ENCODE measurements at regions of chr1 and their contacts with region 1.

Region 1: GRCh38 chr1:97243973-97244560 is 522.5 kb downstream of the PTBP2 start:
- DNase-seq: peak; percentile 48
- H3K4me3 ChIP-seq: no peak overlapping the region
- H3K27ac ChIP-seq: no peak overlapping the region
- H3K4me1 ChIP-seq: no peaks in the 10 kb centered on the region
- H3K27me3 ChIP-seq: no peaks in the 10 kb centered on the region
- CTCF ChIP-seq: peak in 1 of 2 donors; percentile 35
- POLR2A ChIP-seq: no peak

Region 2: DNA sequence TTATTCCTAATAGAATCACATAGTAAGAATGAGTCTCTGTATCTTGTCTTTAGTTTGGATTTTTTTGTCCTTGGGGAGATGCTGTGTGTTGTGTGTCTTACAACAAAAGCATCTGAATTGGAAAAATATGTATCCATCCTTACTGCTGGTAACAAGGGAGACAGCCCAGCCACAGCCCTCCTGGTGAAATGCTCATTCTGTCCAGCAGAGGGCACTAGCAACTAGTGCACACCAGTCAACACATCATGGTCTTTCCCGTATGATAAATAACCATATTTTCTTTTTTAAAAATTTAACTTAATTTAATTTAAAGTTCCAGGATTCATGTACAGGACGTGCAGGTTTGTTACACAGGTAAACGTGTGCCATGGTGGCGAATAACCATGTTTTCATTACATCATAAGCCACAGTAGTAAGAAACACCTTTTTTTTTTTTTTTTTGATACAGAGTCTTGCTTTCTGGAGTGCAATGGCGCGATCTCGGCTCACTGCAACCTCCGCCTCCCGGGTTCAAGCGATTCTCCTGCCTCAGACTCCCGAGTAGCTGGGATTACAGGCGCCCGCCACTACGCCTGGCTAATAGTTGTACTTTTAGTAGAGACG is 277.4 kb before region 1 on chr1:
- CTCF ChIA-PET with region 1: interaction called, 4 read pairs
- POLR2A ChIA-PET with region 1: no interaction called
- dilution Hi-C with region 1: no loop called
- intact Hi-C with region 1: loop called (anchors 5 kb)
- DNase-seq: peak; percentile 84
- H3K4me3 ChIP-seq: peak overlapping the region in 1 of 3 experiments; percentile 38
- H3K27ac ChIP-seq: no peak overlapping the region
- H3K4me1 ChIP-seq: no peaks in the 10 kb centered on the region
- H3K27me3 ChIP-seq: peaks cover 7 to 12% of the 10 kb centered on the region in 2 experiments
- CTCF ChIP-seq: peak; percentile 81 to 85
- POLR2A ChIP-seq: no peak

Region 3: DNA sequence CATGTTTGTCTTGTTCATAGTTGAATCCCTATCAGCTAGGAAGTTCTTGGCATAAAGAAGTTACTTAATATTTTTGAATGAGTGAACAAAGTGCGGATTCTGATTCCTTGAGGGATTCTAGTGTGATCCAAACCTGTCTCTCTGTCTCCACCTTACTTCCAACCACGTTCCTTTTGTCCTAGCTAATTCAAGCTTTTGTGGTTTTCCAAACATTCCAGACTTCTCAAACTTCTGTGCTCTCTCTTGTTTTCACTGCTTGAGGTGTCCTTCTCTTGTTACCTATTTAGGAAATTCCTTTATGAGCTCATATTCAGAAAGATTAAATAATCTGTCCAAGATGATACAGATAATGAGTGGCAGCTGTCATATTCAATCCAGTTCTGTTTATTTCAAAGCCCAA is 169.3 kb before region 1 on chr1:
- CTCF ChIA-PET with region 1: no interaction called
- POLR2A ChIA-PET with region 1: no interaction called
- dilution Hi-C with region 1: no loop called
- intact Hi-C with region 1: no loop called
- DNase-seq: no peak
- H3K4me3 ChIP-seq: no peak overlapping the region
- H3K27ac ChIP-seq: no peak overlapping the region
- H3K4me1 ChIP-seq: no peaks in the 10 kb centered on the region
- H3K27me3 ChIP-seq: no peaks in the 10 kb centered on the region
- CTCF ChIP-seq: no peak
- POLR2A ChIP-seq: no peak

Region 4: GRCh38 chr1:97262842-97263241 is 18.8 kb after region 1 on chr1:
- CTCF ChIA-PET with region 1: interaction called, 10 read pairs
- POLR2A ChIA-PET with region 1: no interaction called
- dilution Hi-C with region 1: no loop called
- intact Hi-C with region 1: no loop called
- DNase-seq: no peak
- H3K4me3 ChIP-seq: no peak overlapping the region
- H3K27ac ChIP-seq: no peak overlapping the region
- H3K4me1 ChIP-seq: no peaks in the 10 kb centered on the region
- H3K27me3 ChIP-seq: no peaks in the 10 kb centered on the region
- CTCF ChIP-seq: no peak
- POLR2A ChIP-seq: no peak

Region 5: DNA sequence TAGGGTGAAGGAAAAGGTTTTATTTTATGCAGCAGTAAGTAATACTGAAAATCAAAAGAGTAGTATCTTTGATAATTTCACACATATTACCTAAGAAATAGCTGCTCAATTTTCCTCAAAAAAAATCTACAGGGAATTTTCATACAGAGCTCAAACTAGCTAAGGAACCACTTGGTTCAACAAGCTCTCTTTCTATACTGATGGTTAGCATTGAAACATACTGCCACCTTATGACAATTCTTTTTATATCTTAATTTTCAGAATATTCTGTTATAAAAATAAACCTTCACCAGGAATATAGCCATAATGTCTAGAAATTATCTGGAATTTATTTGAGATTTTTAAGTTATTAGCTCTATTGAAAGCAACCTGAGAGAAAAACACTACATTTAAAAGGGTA is 534.7 kb after region 1 on chr1:
- CTCF ChIA-PET with region 1: interaction called, 14 read pairs
- POLR2A ChIA-PET with region 1: no interaction called
- dilution Hi-C with region 1: no loop called
- intact Hi-C with region 1: no loop called
- DNase-seq: no peak
- H3K4me3 ChIP-seq: no peak overlapping the region
- H3K27ac ChIP-seq: no peak overlapping the region
- H3K4me1 ChIP-seq: no peaks in the 10 kb centered on the region
- H3K27me3 ChIP-seq: no peaks in the 10 kb centered on the region
- CTCF ChIP-seq: no peak
- POLR2A ChIP-seq: no peak

Region 6: DNA sequence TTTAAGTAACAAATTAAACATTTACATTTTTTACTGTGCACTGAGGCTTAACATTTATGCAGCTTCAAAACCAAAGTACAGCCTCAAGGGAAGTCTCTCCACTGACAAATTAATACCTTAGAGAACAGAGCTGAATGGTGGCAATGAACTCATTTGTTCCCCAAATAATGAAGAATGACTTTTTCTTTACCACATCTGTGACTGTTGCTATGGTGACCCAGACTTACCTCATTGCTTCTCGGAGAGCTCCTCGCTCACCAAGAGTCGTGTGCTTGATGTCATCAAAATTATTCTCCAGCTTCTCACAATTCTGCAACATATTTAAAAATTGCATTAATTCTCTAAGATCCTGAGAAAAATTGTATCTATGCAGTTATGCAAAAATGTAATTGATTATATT is 583.8 kb after region 1 on chr1:
- CTCF ChIA-PET with region 1: interaction called, 11 read pairs
- POLR2A ChIA-PET with region 1: no interaction called
- dilution Hi-C with region 1: no loop called
- intact Hi-C with region 1: no loop called
- DNase-seq: no peak
- H3K4me3 ChIP-seq: no peak overlapping the region
- H3K27ac ChIP-seq: no peak overlapping the region
- H3K4me1 ChIP-seq: no peaks in the 10 kb centered on the region
- H3K27me3 ChIP-seq: no peaks in the 10 kb centered on the region
- CTCF ChIP-seq: no peak
- POLR2A ChIP-seq: no peak

Measured in endothelial cell of umbilical vein (primary cell).